Head of caudate nucleus (tissue), 42 donors: ENCODE measurements at regions of chr5 and their contacts with region 1.

Region 1: GRCh38 chr5:9207817-9208418 is 338.0 kb downstream of the SEMA5A start:
- DNase-seq: peak in 1 of 42 donors; percentile 43

Region 2: GRCh38 chr5:7927466-7928375 is 1280.2 kb before region 1 on chr5:
- intact Hi-C with region 1: loop called (anchors 10 kb)
- DNase-seq: peak; percentile 9 to 86 (median 58)

Region 3: GRCh38 chr5:8756498-8757084 is 451.3 kb before region 1 on chr5:
- intact Hi-C with region 1: loop called (anchors 5 kb)
- DNase-seq: peak in 37 of 42 donors; percentile 18 to 85 (median 58)